ENCODE measurements at regions of chr3 and their contacts with region 1.

Region 1: DNA sequence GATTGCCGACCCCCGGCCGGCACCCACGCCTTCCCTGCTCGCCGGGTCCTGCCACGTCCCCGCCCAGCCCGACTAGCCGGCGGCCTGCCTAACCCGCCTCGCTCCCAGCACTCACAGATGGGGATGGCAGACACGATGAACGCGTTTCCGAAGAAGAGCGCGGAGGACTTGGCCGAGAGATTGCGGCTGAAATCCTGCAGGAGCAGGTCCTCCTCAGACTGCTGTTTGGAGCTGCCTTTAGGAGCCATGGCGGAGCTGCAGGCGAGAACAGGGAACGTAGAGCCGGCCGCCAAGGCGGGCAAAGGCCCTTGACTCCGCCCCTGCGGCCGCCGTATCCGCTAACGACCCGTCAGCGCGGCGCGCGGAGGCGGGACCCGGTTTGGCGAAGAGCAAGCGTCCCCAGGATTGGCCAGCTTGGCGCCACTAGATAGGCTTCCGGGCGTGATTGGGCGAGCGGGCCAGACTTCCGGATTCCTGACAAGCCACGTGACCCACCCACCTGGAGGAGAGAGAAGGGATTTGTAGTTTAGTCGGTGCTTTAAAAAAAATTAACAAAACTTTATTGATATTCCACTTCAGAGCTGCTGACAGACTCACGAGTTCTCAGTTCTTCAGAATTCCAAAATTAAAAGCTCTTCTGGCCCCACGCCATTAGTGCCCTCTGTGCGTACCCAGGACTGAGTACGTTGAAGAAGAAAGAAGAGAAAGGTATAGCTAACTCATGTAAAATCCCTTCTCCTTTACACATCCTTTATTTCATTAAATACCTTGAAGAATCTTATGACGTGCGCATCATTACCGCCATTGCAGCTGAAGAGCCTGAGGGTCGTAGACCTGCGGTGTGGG is at the start of gene SSR3:
- DNase-seq: peak; percentile 100
- H3K4me3 ChIP-seq: peak within 1 kb of the TSS; percentile 77 to 98 (median 90)
- H3K27ac ChIP-seq: peak within 1 kb of the TSS; percentile 77 to 90
- H3K4me1 ChIP-seq: peaks cover 12 to 26% (median 18%) of the 10 kb centered on the region in 4 experiments
- H3K27me3 ChIP-seq: no peaks in the 10 kb centered on the region

Region 2: DNA sequence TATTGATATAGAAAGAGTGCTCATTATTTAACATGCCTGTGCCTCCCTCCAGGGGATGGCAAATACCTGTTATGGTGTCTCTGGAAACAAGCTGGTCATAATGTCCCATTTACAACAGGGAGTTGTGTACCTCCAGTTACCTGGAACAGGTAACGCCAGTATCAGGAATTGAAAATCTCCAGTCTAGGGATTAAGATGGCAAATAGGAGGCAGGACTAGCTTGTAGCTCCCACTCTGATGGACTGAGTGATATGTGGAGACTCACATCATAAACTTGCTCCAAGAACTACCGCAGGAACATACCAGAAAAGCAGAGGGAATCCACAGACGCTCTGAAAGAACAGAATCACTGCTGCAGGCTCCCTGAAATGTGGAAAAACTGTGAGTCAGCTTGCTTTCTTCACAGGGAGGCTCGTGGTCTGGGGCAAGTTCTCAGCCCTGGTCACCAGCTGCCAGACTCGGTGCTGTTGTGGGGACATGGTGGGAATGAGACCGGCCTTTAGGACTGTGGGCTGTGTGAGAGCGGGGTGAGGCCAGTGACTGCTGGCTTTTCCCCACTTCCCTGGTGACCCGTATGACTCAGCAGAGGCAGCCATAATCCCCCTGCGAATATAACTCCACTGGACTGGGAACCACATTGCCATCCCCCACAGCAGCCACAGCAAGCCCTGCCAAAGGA is 337.3 kb before region 1 on chr3:
- CTCF ChIA-PET with region 1: no interaction called
- POLR2A ChIA-PET with region 1: no interaction called
- DNase-seq: no peak
- H3K4me3 ChIP-seq: no peak overlapping the region
- H3K27ac ChIP-seq: no peak overlapping the region
- H3K4me1 ChIP-seq: no peaks in the 10 kb centered on the region
- H3K27me3 ChIP-seq: no peaks in the 10 kb centered on the region

Region 3: GRCh38 chr3:156542715-156543555 is 12.1 kb before region 1 on chr3:
- CTCF ChIA-PET with region 1: interaction called, 19 read pairs
- POLR2A ChIA-PET with region 1: no interaction called
- DNase-seq: no peak
- H3K4me3 ChIP-seq: no peak overlapping the region
- H3K27ac ChIP-seq: no peak overlapping the region
- H3K4me1 ChIP-seq: no peaks in the 10 kb centered on the region
- H3K27me3 ChIP-seq: no peaks in the 10 kb centered on the region